Activated CD4-positive, alpha-beta T cell treated with anti-CD3 and anti-CD28 coated beads, Interleukin-2, amount 10 ng/mL, durations not matched to agents 24 days and 14 days (primary cell): ENCODE measurements at regions of chr1 and their contacts with region 1.

Region 1: DNA sequence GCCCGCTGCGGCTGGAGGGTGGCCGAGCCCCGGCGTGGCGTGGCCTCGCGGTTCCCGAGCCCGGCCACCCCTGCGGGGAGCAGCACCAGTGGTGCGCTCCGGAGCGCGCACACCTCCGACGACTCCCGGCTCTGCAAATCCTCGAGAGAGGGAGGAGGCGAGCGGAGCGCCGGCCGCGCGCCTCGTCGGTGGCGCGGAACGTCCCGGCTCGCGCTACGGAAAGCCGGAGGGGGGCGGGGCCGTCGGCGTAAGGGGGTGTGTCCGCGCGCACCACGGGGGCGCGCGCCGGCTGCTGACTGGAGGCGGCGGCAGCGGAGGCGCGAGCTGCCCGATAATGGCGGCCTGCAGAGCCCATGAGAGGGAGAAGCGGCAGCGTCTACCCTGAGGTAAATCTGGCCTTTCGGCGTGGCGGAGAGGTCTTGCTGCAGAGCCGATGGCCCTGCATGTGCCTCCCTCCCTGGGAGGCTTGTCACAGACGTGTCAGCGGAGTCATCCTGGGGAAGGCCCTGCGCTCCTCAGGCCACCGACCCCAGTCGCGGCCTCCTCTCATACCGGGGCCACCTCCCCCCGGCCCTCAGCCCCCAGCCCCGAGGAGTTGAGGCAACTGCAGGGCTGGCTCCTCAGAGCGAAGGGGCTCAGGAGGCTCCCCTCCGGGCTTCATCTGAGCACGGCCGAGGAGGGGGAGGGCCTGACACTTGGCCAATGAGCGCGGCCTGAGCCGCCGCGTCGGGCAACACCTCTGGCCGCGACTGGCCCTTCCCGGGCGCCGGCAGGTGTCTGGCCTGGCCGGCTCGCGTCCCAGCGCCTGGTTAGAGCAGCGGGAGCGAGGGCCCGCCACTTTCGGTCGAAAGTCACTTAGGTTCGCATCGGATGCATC is at the start of gene PDIK1L:
- DNase-seq: peak; percentile 98
- H3K4me3 Mint-ChIP-seq: peak within 1 kb of the TSS; percentile 90
- H3K27ac Mint-ChIP-seq: peak within 1 kb of the TSS; percentile 95
- H3K4me1 Mint-ChIP-seq: peaks cover 28% of the 10 kb centered on the region
- H3K27me3 Mint-ChIP-seq: no peaks in the 10 kb centered on the region
- total RNA-seq, gene PDIK1L: 15.8 and 18.7 TPM in 2 replicates

Region 2: DNA sequence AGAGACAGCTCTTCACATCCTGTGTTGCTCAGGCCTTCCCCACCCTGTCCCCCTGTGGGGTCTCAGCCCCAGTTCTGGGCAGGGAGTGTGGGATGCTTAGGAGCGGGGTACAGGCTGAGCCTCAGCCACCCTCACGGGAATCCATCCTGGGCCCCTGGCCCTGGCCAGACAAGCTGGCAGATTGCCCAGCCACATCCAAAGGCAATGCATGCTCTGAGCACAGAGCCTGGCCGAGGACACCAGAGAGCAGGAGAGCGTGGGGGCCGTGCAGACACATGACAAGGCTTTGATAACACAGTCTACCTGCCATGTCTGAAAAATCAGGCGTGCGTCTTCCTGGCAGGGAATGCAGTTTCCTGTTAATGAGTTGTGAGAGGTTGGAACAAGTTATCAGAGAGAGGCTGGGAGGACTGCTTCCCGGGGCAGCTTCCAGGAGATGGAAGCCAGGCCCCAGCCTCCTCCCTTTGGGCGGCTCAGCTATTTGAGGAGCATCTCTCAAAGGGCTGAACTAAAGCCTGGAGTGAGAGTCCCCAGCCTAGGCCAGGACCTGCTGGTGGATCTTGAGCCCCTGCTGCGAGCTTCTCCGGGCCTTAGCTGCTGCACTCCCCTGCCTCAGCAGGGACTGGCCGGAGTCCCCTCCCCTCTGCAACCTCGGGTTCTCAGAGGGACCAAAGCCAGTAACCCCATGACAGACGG is 384.0 kb before region 1 on chr1:
- intact Hi-C with region 1: no loop called
- DNase-seq: no peak
- H3K4me3 Mint-ChIP-seq: no peak overlapping the region
- H3K27ac Mint-ChIP-seq: no peak overlapping the region
- H3K4me1 Mint-ChIP-seq: peaks cover 21% of the 10 kb centered on the region
- H3K27me3 Mint-ChIP-seq: peaks cover 58% of the 10 kb centered on the region

Region 3: GRCh38 chr1:26035959-26036755 is 75.6 kb before region 1 on chr1:
- intact Hi-C with region 1: loop called (anchors 5 kb)
- DNase-seq: peak; percentile 95
- H3K4me3 Mint-ChIP-seq: peak overlapping the region; percentile 91
- H3K27ac Mint-ChIP-seq: peak overlapping the region; percentile 63
- H3K4me1 Mint-ChIP-seq: peaks cover 13% of the 10 kb centered on the region
- H3K27me3 Mint-ChIP-seq: peaks cover 13% of the 10 kb centered on the region

Region 4: GRCh38 chr1:26145041-26145959 is 33.5 kb after region 1 on chr1:
- intact Hi-C with region 1: loop called (anchors 1 kb)
- DNase-seq: peak; percentile 93
- H3K4me3 Mint-ChIP-seq: no peak overlapping the region
- H3K27ac Mint-ChIP-seq: no peak overlapping the region
- H3K4me1 Mint-ChIP-seq: peaks cover 2% of the 10 kb centered on the region
- H3K27me3 Mint-ChIP-seq: peaks cover 24% of the 10 kb centered on the region

Region 5: DNA sequence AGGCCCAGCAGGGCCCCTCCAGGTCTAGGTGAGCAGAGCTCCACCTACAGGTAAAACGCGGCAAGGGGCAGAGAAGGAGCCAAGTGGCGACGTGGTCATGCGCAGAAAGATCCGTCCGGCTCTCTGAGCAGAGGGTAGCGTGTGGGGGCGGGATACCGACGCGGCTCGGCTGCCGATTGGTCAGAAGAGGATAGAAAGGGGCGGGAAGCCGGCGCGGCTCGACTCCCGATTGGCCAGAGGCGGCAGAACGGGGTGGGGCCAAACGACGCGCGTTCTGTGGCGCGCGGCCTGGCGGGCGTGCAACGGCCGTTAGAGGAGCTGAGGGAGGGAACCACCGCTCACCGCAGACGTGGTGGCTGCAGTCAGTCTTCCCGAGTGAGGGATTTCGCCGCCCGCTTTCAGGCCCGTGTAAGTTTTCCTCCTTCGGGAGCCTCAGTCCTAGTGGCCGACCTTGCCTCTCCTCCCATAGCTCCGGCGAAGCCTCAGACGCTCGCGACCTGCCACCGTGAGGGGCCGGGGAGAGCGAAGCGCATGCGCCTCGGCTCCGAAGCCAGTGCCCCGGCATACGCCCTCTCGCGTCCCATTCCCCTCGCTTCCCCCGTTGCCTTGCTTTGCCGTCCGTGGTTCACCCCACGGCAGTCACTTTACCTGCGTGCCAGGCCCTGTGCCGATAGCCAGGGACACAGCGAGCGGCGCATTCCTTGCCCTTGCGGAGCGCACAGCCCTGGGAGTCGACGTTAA is 122.3 kb after region 1 on chr1 and contains the start of gene CEP85:
- intact Hi-C with region 1: loop called (anchors 1 kb)
- DNase-seq: peak; percentile 99
- H3K4me3 Mint-ChIP-seq: peak within 1 kb of the TSS; percentile 96
- H3K27ac Mint-ChIP-seq: peak within 1 kb of the TSS; percentile 91
- H3K4me1 Mint-ChIP-seq: peaks cover 31% of the 10 kb centered on the region
- H3K27me3 Mint-ChIP-seq: peaks cover 6% of the 10 kb centered on the region
- total RNA-seq, gene CEP85: 39.3 and 40.8 TPM in 2 replicates

Region 6: GRCh38 chr1:26431979-26432695 is 320.4 kb after region 1 on chr1 and contains the start of gene DHDDS:
- intact Hi-C with region 1: loop called (anchors 5 kb)
- DNase-seq: peak; percentile 100
- H3K4me3 Mint-ChIP-seq: peak within 1 kb of the TSS; percentile 98
- H3K27ac Mint-ChIP-seq: peak within 1 kb of the TSS; percentile 95
- H3K4me1 Mint-ChIP-seq: peaks cover 17% of the 10 kb centered on the region
- H3K27me3 Mint-ChIP-seq: peaks cover 5% of the 10 kb centered on the region
- total RNA-seq, gene DHDDS: 57.0 and 60.2 TPM in 2 replicates